Activated naive CD4-positive, alpha-beta T cell treated with anti-CD3 and anti-CD28 coated beads, Interleukin-2, amount 10 ng/mL, durations not matched to agents 7 days and 5 days (primary cell): ENCODE measurements at regions of chr11 and their contacts with region 1.

Region 1: DNA sequence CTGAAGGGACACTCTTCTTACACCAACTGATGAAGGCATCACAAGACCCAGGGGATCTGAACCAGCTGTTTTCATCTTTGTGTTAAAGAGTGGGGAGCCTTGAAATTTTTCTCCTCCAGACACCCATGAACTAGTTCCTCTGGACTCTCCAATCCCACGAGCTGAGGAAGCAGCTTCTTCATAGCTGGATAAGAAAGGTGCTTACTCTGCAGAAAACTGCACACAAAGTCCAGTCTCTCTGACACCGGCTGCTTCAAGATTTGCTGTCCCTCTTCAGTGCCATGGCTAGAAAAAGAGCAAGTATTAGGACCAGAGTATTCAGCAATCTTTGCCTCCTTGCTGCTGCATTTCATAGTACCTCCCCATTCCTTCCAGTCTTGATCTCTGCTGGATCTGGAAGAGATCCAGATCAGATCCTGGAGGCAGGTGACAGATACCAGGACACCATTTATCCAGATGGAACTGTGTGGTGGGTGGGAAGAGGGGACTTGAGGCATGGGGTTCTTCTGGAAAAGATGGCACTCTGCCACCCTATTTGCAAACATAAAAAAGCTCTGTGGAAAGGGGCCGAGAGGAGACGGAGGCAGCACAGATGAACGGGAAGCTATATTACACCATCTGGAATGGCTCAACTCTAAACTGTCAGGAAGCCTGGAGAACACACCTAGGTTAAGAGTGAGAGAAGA is 25.5 kb downstream of the IL18BP start:
- DNase-seq: no peak
- H3K4me3 Mint-ChIP-seq: no peak overlapping the region
- H3K27ac Mint-ChIP-seq: no peak overlapping the region
- H3K4me1 Mint-ChIP-seq: peaks cover 21% of the 10 kb centered on the region
- H3K27me3 Mint-ChIP-seq: no peaks in the 10 kb centered on the region

Region 2: GRCh38 chr11:72075109-72075508 is 50.9 kb after region 1 on chr11:
- CTCF ChIA-PET with region 1: interaction called, 22 read pairs
- DNase-seq: peak; percentile 33
- H3K4me3 Mint-ChIP-seq: no peak overlapping the region
- H3K27ac Mint-ChIP-seq: peak overlapping the region; percentile 54
- H3K4me1 Mint-ChIP-seq: peaks cover 69% of the 10 kb centered on the region
- H3K27me3 Mint-ChIP-seq: no peaks in the 10 kb centered on the region

Region 3: DNA sequence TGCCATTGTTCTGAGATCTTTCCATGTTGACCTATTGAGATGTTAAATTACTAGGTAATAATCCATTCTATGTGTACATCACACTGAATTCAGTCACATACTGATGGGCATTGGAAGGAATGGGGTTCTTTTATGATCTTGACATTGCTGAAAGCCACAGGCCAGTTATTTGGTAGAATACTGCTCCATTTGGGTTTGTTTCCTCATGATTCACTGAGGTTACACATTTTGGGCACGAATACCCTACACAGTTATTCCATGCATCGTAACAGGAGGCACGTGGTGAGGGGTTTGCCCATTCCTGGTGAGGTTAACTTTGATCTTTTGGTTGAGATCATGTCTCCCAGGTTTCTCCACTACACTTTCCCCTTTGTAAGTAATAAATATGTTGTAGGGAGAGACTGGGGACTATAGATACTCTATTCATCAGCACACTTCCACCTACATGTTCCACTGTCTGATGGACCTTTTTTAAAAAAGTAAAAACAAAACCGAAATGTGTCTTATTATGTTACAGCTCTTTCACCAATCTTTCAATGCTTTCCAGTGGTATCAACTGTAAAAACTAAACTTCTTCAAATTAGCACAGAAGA is 155.7 kb after region 1 on chr11:
- CTCF ChIA-PET with region 1: interaction called, 13 read pairs
- DNase-seq: no peak
- H3K4me3 Mint-ChIP-seq: no peak overlapping the region
- H3K27ac Mint-ChIP-seq: no peak overlapping the region
- H3K4me1 Mint-ChIP-seq: no peaks in the 10 kb centered on the region
- H3K27me3 Mint-ChIP-seq: peaks cover 50% of the 10 kb centered on the region